ENCODE measurements at regions of chr2 and their contacts with region 1.

Region 1: DNA sequence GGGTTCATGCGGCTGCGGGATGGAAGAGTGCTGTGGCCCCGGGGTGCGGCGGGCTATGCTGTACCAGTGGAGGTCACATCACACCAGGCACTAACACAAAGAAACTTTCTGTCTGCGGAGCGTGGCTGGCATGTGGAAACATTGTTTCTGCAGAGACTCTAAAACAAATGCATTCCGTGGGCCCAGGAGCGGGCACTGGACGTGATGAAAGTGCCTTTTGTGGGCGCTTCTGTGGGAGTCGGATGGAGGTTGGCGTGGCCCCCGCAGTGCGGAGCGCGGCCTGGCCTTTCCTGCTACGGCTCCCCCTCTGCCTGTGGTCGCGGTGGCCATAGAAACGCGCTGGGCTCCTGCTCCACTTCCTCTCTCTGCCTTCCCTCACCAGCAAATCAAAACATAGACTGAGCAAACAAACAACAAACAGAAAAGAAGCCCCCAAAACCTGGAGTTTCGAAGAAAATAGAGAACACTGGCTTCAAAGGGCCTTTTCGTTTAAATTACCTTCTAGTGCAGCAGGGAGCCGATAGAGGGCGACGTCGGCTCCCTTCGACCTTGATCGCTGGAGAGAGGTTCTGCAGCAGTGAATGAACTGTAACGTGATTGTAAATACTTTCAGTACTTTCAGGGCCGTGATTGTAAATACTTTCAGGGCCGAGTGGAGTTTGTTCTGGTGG is 51.4 kb downstream of the KIF5C start:
- DNase-seq: peak; percentile 34
- H3K4me3 ChIP-seq: no peak overlapping the region
- H3K27ac ChIP-seq: no peak overlapping the region
- H3K4me1 ChIP-seq: no peaks in the 10 kb centered on the region
- CTCF ChIP-seq: peak; percentile 76

Region 2: DNA sequence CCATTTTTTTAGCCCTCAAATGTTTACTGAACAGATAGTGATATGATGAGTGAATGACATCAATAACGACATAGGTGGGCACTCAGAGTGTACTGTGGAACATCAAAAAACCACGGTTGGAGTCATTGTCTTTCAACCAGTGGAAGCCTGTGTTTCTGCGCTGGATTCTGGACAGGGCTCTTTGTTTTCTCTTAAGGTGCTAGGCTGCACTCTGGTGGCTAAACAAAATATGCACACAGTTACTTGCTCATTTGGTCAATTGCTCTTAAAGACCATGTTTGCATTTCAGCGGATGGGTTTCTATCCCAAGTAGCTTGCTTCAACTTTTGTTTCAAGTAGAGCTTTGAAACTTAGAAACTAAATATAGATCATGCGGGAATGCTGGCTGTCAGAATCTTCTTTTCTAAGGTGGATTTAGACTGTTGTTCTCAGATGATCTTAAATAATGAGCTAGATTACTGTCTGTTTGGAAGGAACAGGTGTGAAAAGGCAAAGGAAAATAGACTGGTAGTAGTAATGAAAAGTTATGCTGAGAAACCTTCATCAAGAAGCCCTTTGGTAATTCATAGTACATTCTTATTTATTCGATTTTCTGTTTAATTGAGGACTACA is 63.6 kb after region 1 on chr2:
- CTCF ChIA-PET with region 1: no interaction called
- POLR2A ChIA-PET with region 1: interaction called, 6 read pairs
- intact Hi-C with region 1: loop called (anchors 5 kb)
- DNase-seq: peak; percentile 68
- H3K4me3 ChIP-seq: no peak overlapping the region
- H3K27ac ChIP-seq: no peak overlapping the region
- H3K4me1 ChIP-seq: no peaks in the 10 kb centered on the region
- CTCF ChIP-seq: peak; percentile 85

Measured in OCI-LY7 (cell line).